SK-N-SH (cell line): ENCODE measurements at regions of chr6 and their contacts with region 1.

Region 1: DNA sequence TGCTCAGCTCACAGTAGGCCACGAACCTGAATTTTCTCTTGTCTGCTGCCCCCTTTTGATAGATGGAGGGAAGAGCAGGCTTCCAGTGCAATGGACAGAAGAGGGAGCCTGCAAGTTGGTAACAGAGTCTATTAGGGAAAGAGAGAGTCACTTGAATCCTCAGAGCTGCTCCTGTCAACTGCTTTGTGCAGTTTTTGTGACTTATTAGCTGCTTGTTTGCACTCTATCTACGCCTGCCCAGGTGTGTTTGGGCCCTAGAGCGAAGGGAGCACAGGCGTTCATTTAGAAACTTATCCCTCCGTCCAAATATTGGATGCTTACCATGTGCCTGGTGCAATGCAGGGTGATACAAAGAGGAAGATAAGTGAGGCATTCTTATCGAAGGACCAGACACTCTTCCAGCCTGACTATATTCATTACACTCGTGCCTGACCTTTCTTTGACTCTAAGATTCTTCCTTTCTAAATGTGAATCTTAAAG is 11.6 kb upstream of the SLC2A12 start:
- DNase-seq: peak; percentile 77
- H3K4me3 ChIP-seq: peak overlapping the region in 1 of 2 experiments; percentile 24; a peak in 1 of 4 replicates
- H3K27ac ChIP-seq: no peak overlapping the region
- H3K4me1 ChIP-seq: peaks cover 2 to 16% of the 10 kb centered on the region in 2 experiments; a peak in 2 of 4 replicates
- H3K27me3 ChIP-seq: no peaks in the 10 kb centered on the region
- CTCF ChIP-seq: peak; percentile 88
- EP300 ChIP-seq: no peak
- RAD21 ChIP-seq: peak; percentile 88

Region 2: GRCh38 chr6:133945158-133945557 is 118.8 kb before region 1 on chr6:
- CTCF ChIA-PET with region 1: interaction called, 42 read pairs
- POLR2A ChIA-PET with region 1: no interaction called
- DNase-seq: no peak
- H3K4me3 ChIP-seq: no peak overlapping the region
- H3K27ac ChIP-seq: no peak overlapping the region
- H3K4me1 ChIP-seq: peaks cover 0 to 2% of the 10 kb centered on the region in 2 experiments; a peak in 1 of 4 replicates
- H3K27me3 ChIP-seq: peaks cover 4% of the 10 kb centered on the region; the same call in 1 of the 2 replicates
- CTCF ChIP-seq: no peak
- EP300 ChIP-seq: no peak
- RAD21 ChIP-seq: no peak

Region 3: GRCh38 chr6:133966654-133967329 is 97.2 kb before region 1 on chr6:
- CTCF ChIA-PET with region 1: interaction called, 17 read pairs
- POLR2A ChIA-PET with region 1: no interaction called
- DNase-seq: no peak
- H3K4me3 ChIP-seq: no peak overlapping the region
- H3K27ac ChIP-seq: no peak overlapping the region
- H3K4me1 ChIP-seq: peaks cover 6 to 8% of the 10 kb centered on the region in 2 experiments; a peak in 3 of 4 replicates
- H3K27me3 ChIP-seq: no peaks in the 10 kb centered on the region
- CTCF ChIP-seq: no peak
- EP300 ChIP-seq: no peak
- RAD21 ChIP-seq: no peak

Region 4: DNA sequence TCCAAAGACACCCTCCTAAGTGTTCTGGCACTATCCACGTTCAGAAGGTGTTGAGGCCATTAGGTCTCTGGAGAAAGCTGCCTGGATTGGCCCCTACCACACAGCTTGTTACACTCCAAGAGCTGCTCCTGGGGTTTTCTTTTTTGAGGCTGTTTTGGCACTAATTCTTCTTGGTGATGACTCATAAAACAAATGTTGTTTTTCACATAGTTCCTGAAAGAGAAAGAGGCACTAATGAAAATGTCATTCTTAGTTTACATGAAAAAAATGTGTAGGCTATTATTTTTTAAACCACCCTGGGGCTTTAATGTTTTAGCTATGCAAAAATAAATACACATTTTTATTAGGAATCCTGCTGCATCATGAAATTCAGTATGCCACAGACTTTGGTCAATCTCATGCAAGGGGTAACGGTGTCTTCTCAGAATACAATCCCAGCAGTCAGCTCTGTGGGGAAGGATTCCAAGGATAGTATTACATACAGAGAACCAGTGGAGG is 72.9 kb before region 1 on chr6:
- CTCF ChIA-PET with region 1: interaction called, 12 read pairs
- POLR2A ChIA-PET with region 1: no interaction called
- DNase-seq: no peak
- H3K4me3 ChIP-seq: no peak overlapping the region
- H3K27ac ChIP-seq: peak overlapping the region in 1 of 2 experiments; percentile 63; a peak in 2 of 4 replicates
- H3K4me1 ChIP-seq: 0 out of 4 replicates have a peak, but pooled peaks cover 0 to 8% of the 10 kb centered on the region in 2 experiments
- H3K27me3 ChIP-seq: no peaks in the 10 kb centered on the region
- CTCF ChIP-seq: no peak
- EP300 ChIP-seq: no peak
- RAD21 ChIP-seq: no peak

Region 5: GRCh38 chr6:134080171-134080795 is 16.3 kb after region 1 on chr6:
- CTCF ChIA-PET with region 1: interaction called, 18 read pairs
- POLR2A ChIA-PET with region 1: no interaction called
- DNase-seq: no peak
- H3K4me3 ChIP-seq: no peak overlapping the region
- H3K27ac ChIP-seq: no peak overlapping the region
- H3K4me1 ChIP-seq: no peaks in the 10 kb centered on the region
- H3K27me3 ChIP-seq: no peaks in the 10 kb centered on the region; the same call in 1 of the 2 replicates
- CTCF ChIP-seq: no peak
- EP300 ChIP-seq: no peak
- RAD21 ChIP-seq: no peak

Region 6: GRCh38 chr6:134103006-134103405 is 39.0 kb after region 1 on chr6:
- CTCF ChIA-PET with region 1: interaction called, 45 read pairs
- POLR2A ChIA-PET with region 1: no interaction called
- DNase-seq: no peak
- H3K4me3 ChIP-seq: no peak overlapping the region
- H3K27ac ChIP-seq: no peak overlapping the region
- H3K4me1 ChIP-seq: peaks cover 0 to 8% of the 10 kb centered on the region in 2 experiments; a peak in 2 of 4 replicates
- H3K27me3 ChIP-seq: no peaks in the 10 kb centered on the region; the same call in 1 of the 2 replicates
- CTCF ChIP-seq: no peak
- EP300 ChIP-seq: no peak
- RAD21 ChIP-seq: no peak

Region 7: GRCh38 chr6:134138226-134138975 is 74.4 kb after region 1 on chr6:
- CTCF ChIA-PET with region 1: no interaction called
- POLR2A ChIA-PET with region 1: no interaction called
- DNase-seq: no peak
- H3K4me3 ChIP-seq: no peak overlapping the region
- H3K27ac ChIP-seq: no peak overlapping the region
- H3K4me1 ChIP-seq: no peaks in the 10 kb centered on the region
- H3K27me3 ChIP-seq: no peaks in the 10 kb centered on the region
- CTCF ChIP-seq: no peak
- EP300 ChIP-seq: no peak
- RAD21 ChIP-seq: no peak